HCT116 (cell line): ENCODE measurements at regions of chr2 and their contacts with region 1.

Region 1: DNA sequence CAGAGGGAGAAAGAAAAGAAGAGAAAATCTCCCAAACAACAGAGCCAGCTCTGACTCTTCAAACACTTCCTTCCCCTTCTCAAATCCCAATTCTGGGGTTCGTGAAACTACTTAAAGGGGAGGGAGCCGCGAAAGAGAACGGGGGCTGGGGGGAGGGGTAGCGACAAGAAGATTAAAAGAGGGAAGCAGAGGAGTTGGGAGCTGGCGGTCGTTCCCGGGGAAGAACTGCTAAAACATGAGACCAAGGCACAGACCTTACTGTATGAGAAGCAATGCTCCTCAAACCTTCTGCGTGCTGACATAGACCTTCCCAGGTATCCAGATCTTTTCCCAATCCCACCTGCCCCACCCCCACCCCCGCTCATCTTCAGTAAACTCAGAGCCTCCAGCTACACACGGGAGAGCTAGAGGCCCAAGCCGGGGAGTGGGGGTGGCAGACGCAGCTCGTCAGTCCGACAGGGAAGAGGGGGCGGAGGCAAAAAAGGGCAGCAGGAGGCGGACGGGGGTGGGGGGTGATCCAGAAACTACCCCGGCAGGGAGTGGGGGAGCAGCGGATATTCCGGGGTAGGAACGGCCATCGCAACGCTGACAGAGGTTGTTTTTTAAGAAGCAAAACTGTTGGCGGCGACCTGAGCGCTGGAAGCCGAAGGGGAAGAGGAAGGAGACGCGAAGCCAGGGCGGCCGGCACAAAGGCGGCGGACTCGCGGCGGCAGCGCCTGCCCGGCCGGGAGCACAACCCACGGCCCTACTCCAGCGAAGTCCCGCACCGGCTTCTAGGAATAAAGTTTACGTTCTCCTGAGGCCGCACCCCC is 1.0 kb downstream of the BAZ2B start:
- DNase-seq: peak; percentile 46
- ATAC-seq: peak; percentile 89
- H3K4me3 ChIP-seq: peak overlapping the region; percentile 60 to 70
- H3K27ac ChIP-seq: peak overlapping the region; percentile 63
- H3K4me1 ChIP-seq: peaks cover 10 to 19% of the 10 kb centered on the region in 2 experiments; a peak in 3 of 4 replicates
- H3K27me3 ChIP-seq: no peaks in the 10 kb centered on the region
- CTCF ChIP-seq: no peak
- POLR2A ChIP-seq: no peak
- RAD21 ChIP-seq: no peak

Region 2: GRCh38 chr2:159286709-159287441 is 328.5 kb before region 1 on chr2:
- CTCF ChIA-PET with region 1: no interaction called
- POLR2A ChIA-PET with region 1: no interaction called
- RAD21 ChIA-PET with region 1: no interaction called
- intact Hi-C with region 1: loop called (anchors 5 kb)
- DNase-seq: peak; percentile 87
- ATAC-seq: peak; percentile 95
- H3K4me3 ChIP-seq: peak overlapping the region; percentile 73 to 78
- H3K27ac ChIP-seq: peak overlapping the region; percentile 86
- H3K4me1 ChIP-seq: peaks cover 7 to 29% of the 10 kb centered on the region in 2 experiments
- H3K27me3 ChIP-seq: no peaks in the 10 kb centered on the region
- CTCF ChIP-seq: no peak
- POLR2A ChIP-seq: peak; percentile 75
- RAD21 ChIP-seq: no peak

Region 3: GRCh38 chr2:159409116-159409800 is 206.1 kb before region 1 on chr2:
- CTCF ChIA-PET with region 1: no interaction called
- POLR2A ChIA-PET with region 1: no interaction called
- RAD21 ChIA-PET with region 1: no interaction called
- intact Hi-C with region 1: no loop called
- DNase-seq: no peak
- ATAC-seq: no peak
- H3K4me3 ChIP-seq: no peak overlapping the region
- H3K27ac ChIP-seq: no peak overlapping the region
- H3K4me1 ChIP-seq: no peaks in the 10 kb centered on the region
- H3K27me3 ChIP-seq: no peaks in the 10 kb centered on the region
- CTCF ChIP-seq: no peak
- POLR2A ChIP-seq: no peak
- RAD21 ChIP-seq: no peak

Region 4: GRCh38 chr2:159600752-159601151 is 14.6 kb before region 1 on chr2:
- CTCF ChIA-PET with region 1: no interaction called
- POLR2A ChIA-PET with region 1: no interaction called
- RAD21 ChIA-PET with region 1: no interaction called
- intact Hi-C with region 1: loop called (anchors 2 kb)
- DNase-seq: peak; percentile 80
- ATAC-seq: peak; percentile 97
- H3K4me3 ChIP-seq: peak overlapping the region in 1 of 2 experiments; percentile 13; a peak in 2 of 4 replicates
- H3K27ac ChIP-seq: peak overlapping the region; percentile 2; the same call in 1 of the 2 replicates
- H3K4me1 ChIP-seq: peaks cover 19 to 22% of the 10 kb centered on the region in 2 experiments
- H3K27me3 ChIP-seq: no peaks in the 10 kb centered on the region
- CTCF ChIP-seq: no peak
- POLR2A ChIP-seq: no peak
- RAD21 ChIP-seq: peak; percentile 28; the same call in 1 of the 2 replicates